Activated CD8-positive, alpha-beta T cell treated with anti-CD3 and anti-CD28 coated beads for 36 hours (primary cell): ENCODE measurements at regions of chr14 and their contacts with region 1.

Region 1: GRCh38 chr14:23567192-23568020 is at the start of gene AP1G2:
- DNase-seq: peak; percentile 94
- ATAC-seq: peak; percentile 97
- H3K4me3 Mint-ChIP-seq: peak within 1 kb of the TSS; percentile 94
- H3K27ac Mint-ChIP-seq: peak within 1 kb of the TSS; percentile 99
- H3K4me1 Mint-ChIP-seq: peaks cover 23% of the 10 kb centered on the region
- H3K27me3 Mint-ChIP-seq: peaks cover 3% of the 10 kb centered on the region
- CTCF ChIP-seq: no peak
- total RNA-seq, gene AP1G2: 146 to 155 TPM

Region 2: DNA sequence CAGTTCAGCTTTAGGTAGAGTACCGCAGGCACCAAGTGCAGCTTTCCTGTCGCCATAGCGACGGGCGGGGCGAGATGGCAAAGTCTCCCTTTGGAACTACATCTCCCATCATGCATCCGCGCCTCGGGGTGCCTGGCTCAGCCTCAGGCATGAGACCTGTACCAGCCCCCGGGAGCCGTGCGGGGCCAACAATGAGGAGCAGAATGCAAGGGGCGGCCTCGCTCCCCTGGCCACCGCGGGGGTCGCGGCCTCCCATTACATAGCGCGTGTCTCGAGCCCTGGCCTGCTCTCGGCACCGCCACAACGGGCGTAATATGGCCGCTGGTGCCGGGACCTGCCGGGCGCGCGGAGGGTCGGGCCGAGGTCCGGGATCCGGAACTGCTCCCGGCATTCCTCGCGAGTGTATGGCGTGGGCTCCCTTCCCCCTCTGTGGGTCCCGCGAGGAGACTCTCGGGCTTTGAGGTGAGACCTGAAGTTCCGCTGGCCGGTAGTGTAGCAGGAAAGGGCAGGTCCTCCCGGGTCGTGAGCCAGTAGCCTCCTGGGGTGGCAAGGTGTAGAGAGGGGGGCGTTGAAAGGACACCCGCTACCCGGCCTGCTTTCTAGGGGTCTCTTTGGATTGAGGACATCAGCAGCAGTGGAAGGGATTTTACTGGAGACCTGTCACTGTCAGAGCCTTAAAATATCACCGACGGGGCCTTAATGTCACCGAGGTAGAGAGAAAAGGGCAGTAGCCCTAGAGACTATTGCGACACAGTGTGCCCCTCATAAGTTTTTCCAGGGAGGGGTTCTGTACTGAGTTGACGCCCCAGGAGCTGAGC is 11.3 kb before region 1 on chr14 and contains the start of gene THTPA:
- CTCF ChIA-PET with region 1: interaction called, 51 read pairs
- POLR2A ChIA-PET with region 1: interaction called, 4 read pairs
- intact Hi-C with region 1: no loop called
- DNase-seq: peak; percentile 98
- ATAC-seq: peak; percentile 80
- H3K4me3 Mint-ChIP-seq: peak within 1 kb of the TSS; percentile 94
- H3K27ac Mint-ChIP-seq: peak within 1 kb of the TSS; percentile 96
- H3K4me1 Mint-ChIP-seq: peaks cover 38% of the 10 kb centered on the region
- H3K27me3 Mint-ChIP-seq: no peaks in the 10 kb centered on the region
- CTCF ChIP-seq: no peak
- total RNA-seq, gene THTPA: 5.1 to 7.6 TPM

Region 3: GRCh38 chr14:23621204-23621931 is 54.0 kb after region 1 on chr14:
- CTCF ChIA-PET with region 1: no interaction called
- POLR2A ChIA-PET with region 1: no interaction called
- intact Hi-C with region 1: no loop called
- DNase-seq: no peak
- ATAC-seq: no peak
- H3K4me3 Mint-ChIP-seq: no peak overlapping the region
- H3K27ac Mint-ChIP-seq: no peak overlapping the region
- H3K4me1 Mint-ChIP-seq: peaks cover 9% of the 10 kb centered on the region
- H3K27me3 Mint-ChIP-seq: peaks cover 1% of the 10 kb centered on the region
- CTCF ChIP-seq: no peak

Region 4: DNA sequence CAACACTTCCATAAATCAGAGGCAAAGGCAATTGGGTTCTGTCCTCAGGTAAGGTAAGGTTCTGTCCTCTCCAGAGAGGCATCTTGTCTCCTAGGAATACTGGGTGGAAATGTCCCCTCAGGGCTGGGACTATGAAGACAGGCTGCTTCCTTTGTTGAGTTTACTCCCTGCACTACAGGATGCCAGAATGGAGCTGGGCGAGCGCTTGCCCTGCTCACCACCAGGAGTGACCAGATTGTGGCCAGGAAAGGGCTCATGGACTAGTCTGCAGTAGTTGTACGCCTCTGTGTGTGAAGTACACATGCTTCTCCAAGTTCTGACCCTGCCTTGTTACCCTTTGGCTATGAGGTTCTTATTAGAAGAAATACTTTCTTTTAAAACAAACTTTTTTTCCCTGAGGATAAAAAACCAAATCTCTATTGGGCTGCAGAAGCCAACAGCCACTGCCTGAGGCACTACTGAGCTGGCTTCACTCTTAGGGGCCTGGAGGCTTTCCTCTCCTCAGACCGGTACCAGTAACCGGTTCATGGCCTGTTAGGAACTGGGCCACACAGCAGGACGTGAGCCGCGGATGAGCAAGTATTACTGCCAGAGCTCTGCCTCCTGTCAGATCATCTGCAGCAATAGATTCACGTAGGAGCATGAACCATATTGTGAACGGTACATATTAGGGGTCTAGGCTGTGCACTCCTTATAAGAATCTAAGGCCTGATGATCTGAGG is 152.0 kb after region 1 on chr14:
- CTCF ChIA-PET with region 1: no interaction called
- POLR2A ChIA-PET with region 1: no interaction called
- intact Hi-C with region 1: no loop called
- DNase-seq: no peak
- ATAC-seq: no peak
- H3K4me3 Mint-ChIP-seq: no peak overlapping the region
- H3K27ac Mint-ChIP-seq: no peak overlapping the region
- H3K4me1 Mint-ChIP-seq: no peaks in the 10 kb centered on the region
- H3K27me3 Mint-ChIP-seq: no peaks in the 10 kb centered on the region
- CTCF ChIP-seq: no peak